ENCODE measurements at regions of chr1 and their contacts with region 1.

Region 1: GRCh38 chr1:228109073-228109961 is at the start of gene MRPL55:
- DNase-seq: peak; percentile 99
- H3K4me3 Mint-ChIP-seq: peak within 1 kb of the TSS; percentile 87
- H3K27ac Mint-ChIP-seq: peak within 1 kb of the TSS; percentile 89
- H3K4me1 Mint-ChIP-seq: peaks cover 28% of the 10 kb centered on the region
- H3K27me3 Mint-ChIP-seq: peaks cover 3% of the 10 kb centered on the region
- total RNA-seq, gene MRPL55: 53.3 and 61.7 TPM in 2 replicates

Region 2: DNA sequence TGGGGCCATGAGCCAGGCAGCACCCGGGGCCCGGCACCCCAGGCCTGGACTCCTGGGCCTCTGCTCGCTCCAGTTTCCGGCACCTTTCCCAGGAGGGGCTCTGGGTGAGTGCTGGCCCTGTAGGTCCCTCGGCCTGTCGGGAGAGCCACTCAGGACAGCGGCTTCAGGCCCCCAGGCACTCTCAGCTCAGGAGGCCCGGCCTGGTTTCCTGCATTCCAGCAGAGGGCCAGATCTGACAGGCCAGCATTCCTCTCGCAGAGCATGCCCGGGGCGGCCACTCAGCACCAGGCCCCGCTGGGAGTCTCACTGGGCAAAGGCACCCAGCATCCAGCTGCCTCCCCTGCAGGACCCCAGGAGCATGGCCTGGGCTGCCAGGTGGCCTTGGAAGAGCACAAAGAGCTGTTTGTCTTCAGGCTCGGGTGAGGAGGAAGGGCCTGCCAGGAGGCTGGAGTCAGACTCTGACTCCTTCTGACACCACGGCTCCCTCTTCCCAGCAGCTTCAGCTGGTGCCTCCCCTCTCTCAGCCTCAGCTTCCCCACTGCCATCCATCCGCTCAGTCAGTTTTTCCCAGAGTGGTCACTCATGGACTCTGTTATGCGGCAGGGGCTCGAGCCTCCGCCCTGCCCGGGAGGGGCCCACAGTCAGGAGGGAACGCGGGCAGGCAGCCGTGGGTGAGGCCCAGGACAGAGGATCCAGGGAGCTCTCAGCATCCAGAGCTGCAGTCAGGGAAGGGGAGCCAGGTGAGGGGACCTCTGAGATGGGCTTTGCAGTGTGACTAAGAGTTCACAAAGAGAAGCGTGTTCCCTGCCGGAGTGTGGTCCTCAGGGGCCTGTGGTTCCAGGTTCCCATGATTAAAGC is 213.3 kb before region 1 on chr1:
- intact Hi-C with region 1: no loop called
- DNase-seq: no peak
- H3K4me3 Mint-ChIP-seq: no peak overlapping the region
- H3K27ac Mint-ChIP-seq: no peak overlapping the region
- H3K4me1 Mint-ChIP-seq: no peaks in the 10 kb centered on the region
- H3K27me3 Mint-ChIP-seq: peaks cover 1% of the 10 kb centered on the region

Region 3: GRCh38 chr1:228059634-228060457 is 49.5 kb before region 1 on chr1:
- intact Hi-C with region 1: loop called (anchors 2 kb)
- DNase-seq: peak; percentile 58
- H3K4me3 Mint-ChIP-seq: peak overlapping the region; percentile 68
- H3K27ac Mint-ChIP-seq: no peak overlapping the region
- H3K4me1 Mint-ChIP-seq: no peaks in the 10 kb centered on the region
- H3K27me3 Mint-ChIP-seq: peaks cover 43% of the 10 kb centered on the region

Region 4: GRCh38 chr1:228131766-228132165 is 22.4 kb after region 1 on chr1:
- intact Hi-C with region 1: loop called (anchors 1 kb)
- DNase-seq: no peak
- H3K4me3 Mint-ChIP-seq: no peak overlapping the region
- H3K27ac Mint-ChIP-seq: no peak overlapping the region
- H3K4me1 Mint-ChIP-seq: peaks cover 9% of the 10 kb centered on the region
- H3K27me3 Mint-ChIP-seq: peaks cover 24% of the 10 kb centered on the region

Region 5: DNA sequence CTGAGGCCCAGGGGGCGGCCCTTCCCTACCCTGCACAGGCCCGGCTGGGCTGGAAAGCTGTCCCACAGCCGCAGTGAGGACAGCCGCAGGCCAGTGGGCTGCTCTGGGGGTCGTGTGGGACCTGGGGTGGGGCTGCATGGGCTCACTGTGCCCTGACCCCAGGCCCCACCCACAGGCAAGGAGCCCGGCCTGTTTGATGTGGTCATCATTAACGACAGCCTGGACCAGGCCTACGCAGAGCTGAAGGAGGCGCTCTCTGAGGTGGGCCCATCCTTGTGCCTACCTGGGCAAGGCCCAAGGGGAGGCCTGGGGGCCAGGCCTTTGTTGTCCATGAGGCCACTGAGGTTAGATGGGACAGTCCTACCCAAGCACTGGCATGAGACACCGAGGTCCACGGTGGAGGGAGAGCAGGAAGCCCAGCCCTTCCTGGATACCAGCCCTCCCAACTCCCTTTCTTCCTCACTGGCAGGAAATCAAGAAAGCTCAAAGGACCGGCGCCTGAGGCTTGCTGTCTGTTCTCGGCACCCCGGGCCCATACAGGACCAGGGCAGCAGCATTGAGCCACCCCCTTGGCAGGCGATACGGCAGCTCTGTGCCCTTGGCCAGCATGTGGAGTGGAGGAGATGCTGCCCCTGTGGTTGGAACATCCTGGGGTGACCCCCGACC is 39.0 kb after region 1 on chr1:
- intact Hi-C with region 1: no loop called
- DNase-seq: no peak
- H3K4me3 Mint-ChIP-seq: no peak overlapping the region
- H3K27ac Mint-ChIP-seq: peak overlapping the region; percentile 18
- H3K4me1 Mint-ChIP-seq: peaks cover 9% of the 10 kb centered on the region
- H3K27me3 Mint-ChIP-seq: no peaks in the 10 kb centered on the region

Region 6: GRCh38 chr1:228185641-228185965 is 76.3 kb after region 1 on chr1:
- intact Hi-C with region 1: no loop called
- DNase-seq: no peak
- H3K4me3 Mint-ChIP-seq: no peak overlapping the region
- H3K27ac Mint-ChIP-seq: no peak overlapping the region
- H3K4me1 Mint-ChIP-seq: no peaks in the 10 kb centered on the region
- H3K27me3 Mint-ChIP-seq: no peaks in the 10 kb centered on the region

Region 7: GRCh38 chr1:228275739-228276421 is 166.6 kb after region 1 on chr1:
- intact Hi-C with region 1: loop called (anchors 2 kb)
- DNase-seq: peak; percentile 83
- H3K4me3 Mint-ChIP-seq: peak overlapping the region; percentile 73
- H3K27ac Mint-ChIP-seq: no peak overlapping the region
- H3K4me1 Mint-ChIP-seq: peaks cover 8% of the 10 kb centered on the region
- H3K27me3 Mint-ChIP-seq: no peaks in the 10 kb centered on the region

Region 8: DNA sequence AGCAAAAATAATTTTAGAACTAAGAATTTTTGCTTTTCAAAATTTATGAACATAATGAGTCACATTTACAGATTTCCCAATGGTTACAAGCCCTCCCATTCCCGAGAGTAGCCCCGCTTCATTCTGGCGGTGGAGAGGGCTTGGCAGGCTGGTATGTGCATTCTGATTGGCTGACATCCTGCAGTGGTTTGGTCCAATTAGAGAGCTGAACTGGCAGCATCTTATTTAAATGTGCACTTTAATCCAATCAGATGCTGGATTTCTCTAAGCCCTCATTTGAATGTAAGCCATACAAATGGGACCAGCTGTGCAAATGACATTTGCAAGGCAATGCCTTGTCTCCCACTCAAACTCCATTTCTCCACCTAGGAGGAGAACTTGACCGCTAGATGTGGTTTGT is 325.4 kb after region 1 on chr1:
- intact Hi-C with region 1: no loop called
- DNase-seq: no peak
- H3K4me3 Mint-ChIP-seq: no peak overlapping the region
- H3K27ac Mint-ChIP-seq: no peak overlapping the region
- H3K4me1 Mint-ChIP-seq: peaks cover 6% of the 10 kb centered on the region
- H3K27me3 Mint-ChIP-seq: peaks cover 18% of the 10 kb centered on the region

Measured in activated T-helper 1 cell treated with anti-CD3 and anti-CD28 coated beads, Interleukin-12 subunit alpha, Interleukin-12 subunit beta, Interleukin-2, Interleukin-4 antibody, amounts not matched to agents 30 ng/mL and 10 ng/mL and 1 ng/mL, durations not matched to agents 14 hours and 24 hours and 36 hours (primary cell).